ENCODE measurements at regions of chr19 and their contacts with region 1.

Region 1: GRCh38 chr19:18388100-18388959 is 2.4 kb downstream of the GDF15 start:
- DNase-seq: peak; percentile 72
- H3K4me3 Mint-ChIP-seq: peak overlapping the region; percentile 51
- H3K27ac Mint-ChIP-seq: no peak overlapping the region
- H3K4me1 Mint-ChIP-seq: peaks cover 4% of the 10 kb centered on the region
- H3K27me3 Mint-ChIP-seq: peaks cover 47% of the 10 kb centered on the region

Region 2: GRCh38 chr19:18340190-18340989 is 47.9 kb before region 1 on chr19 and contains the start of gene PGPEP1:
- intact Hi-C with region 1: no loop called
- DNase-seq: peak; percentile 50
- H3K4me3 Mint-ChIP-seq: peak within 1 kb of the TSS; percentile 86
- H3K27ac Mint-ChIP-seq: peak within 1 kb of the TSS; percentile 89
- H3K4me1 Mint-ChIP-seq: peaks cover 6% of the 10 kb centered on the region
- H3K27me3 Mint-ChIP-seq: no peaks in the 10 kb centered on the region
- total RNA-seq, gene PGPEP1: 24.9 and 29.4 TPM in 2 replicates

Region 3: DNA sequence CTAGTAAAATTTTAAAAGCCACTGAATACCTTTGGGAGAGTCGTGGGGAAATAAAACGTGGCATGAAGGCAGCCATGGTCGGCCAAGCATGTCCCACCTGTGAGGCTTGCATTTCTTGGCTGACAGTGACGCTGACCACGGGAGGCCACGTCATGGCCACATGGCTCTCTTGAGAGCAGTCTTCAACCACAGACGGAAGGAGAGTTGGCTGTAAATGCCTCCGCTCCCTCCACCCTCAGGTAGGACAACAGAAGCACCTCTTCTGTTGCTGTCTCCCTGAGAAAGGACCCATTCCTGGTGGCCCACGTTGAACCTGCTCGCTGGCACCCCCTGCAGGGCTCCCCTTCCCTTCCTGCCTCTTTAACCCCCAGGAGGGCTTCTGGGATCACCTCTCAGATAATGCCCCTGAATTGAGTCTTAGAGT is 19.7 kb after region 1 on chr19:
- intact Hi-C with region 1: loop called (anchors 1 kb)
- DNase-seq: no peak
- H3K4me3 Mint-ChIP-seq: no peak overlapping the region
- H3K27ac Mint-ChIP-seq: no peak overlapping the region
- H3K4me1 Mint-ChIP-seq: no peaks in the 10 kb centered on the region
- H3K27me3 Mint-ChIP-seq: peaks cover 6% of the 10 kb centered on the region